Activated CD4-positive, alpha-beta memory T cell treated with anti-CD3 and anti-CD28 coated beads for 36 hours (primary cell): ENCODE measurements at regions of chr3 and their contacts with region 1.

Region 1: DNA sequence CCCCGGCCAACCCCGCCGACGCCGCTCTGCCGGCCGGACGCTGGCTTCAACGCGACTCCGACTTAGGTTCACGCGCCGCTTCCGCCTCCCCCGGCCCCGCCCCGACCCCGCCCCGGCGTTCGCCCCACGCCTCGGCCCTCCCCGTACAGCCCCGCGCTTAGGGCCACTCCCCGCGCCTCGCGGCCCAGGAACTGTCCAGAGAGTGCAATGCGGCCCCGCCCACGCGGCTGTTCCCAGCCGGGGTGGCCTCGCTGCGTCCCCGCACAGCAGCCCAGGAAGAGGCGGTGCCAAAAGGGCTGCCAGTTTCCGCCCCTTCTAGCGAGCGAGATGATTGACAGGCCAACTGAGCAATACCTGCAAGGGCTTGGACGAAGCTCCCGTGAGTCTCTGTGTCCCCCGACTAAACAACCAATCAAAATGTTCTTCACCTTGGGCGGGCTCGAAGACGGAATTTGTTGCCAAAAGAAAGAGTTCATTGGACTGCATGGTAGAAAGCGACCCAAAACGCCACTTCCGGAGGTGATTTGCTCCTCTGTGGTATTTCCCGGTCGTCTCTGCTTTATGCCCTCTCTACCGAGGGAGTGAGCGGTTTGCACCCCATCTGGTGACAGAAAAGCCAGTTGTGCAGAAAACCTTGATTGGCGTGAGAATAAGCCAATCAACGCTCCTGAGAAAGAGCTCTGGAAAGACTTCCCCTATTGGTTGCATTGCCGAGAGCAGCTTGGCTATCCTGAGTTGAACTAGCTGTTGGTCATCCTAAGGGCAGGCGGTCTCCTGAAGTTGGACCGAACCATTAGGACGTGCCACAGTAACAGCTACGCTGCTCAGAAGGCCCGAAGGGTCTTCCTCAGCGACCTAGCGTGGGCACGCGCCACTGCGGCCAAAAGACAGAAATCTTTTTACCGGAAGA is at the start of gene UBP1:
- DNase-seq: peak; percentile 99
- H3K4me3 Mint-ChIP-seq: peak within 1 kb of the TSS; percentile 100
- H3K27ac Mint-ChIP-seq: peak within 1 kb of the TSS; percentile 100
- H3K4me1 Mint-ChIP-seq: peaks cover 39% of the 10 kb centered on the region
- H3K27me3 Mint-ChIP-seq: no peaks in the 10 kb centered on the region
- total RNA-seq, gene UBP1: 52.6 to 53.2 TPM

Region 2: GRCh38 chr3:33372218-33373081 is 68.1 kb before region 1 on chr3:
- CTCF ChIA-PET with region 1: interaction called, 13 read pairs
- POLR2A ChIA-PET with region 1: interaction called, 3 read pairs
- intact Hi-C with region 1: no loop called
- DNase-seq: peak; percentile 49
- H3K4me3 Mint-ChIP-seq: no peak overlapping the region
- H3K27ac Mint-ChIP-seq: no peak overlapping the region
- H3K4me1 Mint-ChIP-seq: peaks cover 7% of the 10 kb centered on the region
- H3K27me3 Mint-ChIP-seq: peaks cover 10% of the 10 kb centered on the region

Region 3: GRCh38 chr3:33417066-33417673 is 23.4 kb before region 1 on chr3:
- CTCF ChIA-PET with region 1: interaction called, 3 read pairs
- POLR2A ChIA-PET with region 1: no interaction called
- intact Hi-C with region 1: loop called (anchors 1 kb)
- DNase-seq: peak; percentile 67
- H3K4me3 Mint-ChIP-seq: no peak overlapping the region
- H3K27ac Mint-ChIP-seq: peak overlapping the region; percentile 73
- H3K4me1 Mint-ChIP-seq: peaks cover 14% of the 10 kb centered on the region
- H3K27me3 Mint-ChIP-seq: no peaks in the 10 kb centered on the region

Region 4: GRCh38 chr3:33717866-33718594 is 277.5 kb after region 1 on chr3 and contains the start of gene CLASP2:
- CTCF ChIA-PET with region 1: no interaction called
- POLR2A ChIA-PET with region 1: no interaction called
- intact Hi-C with region 1: loop called (anchors 1 kb)
- DNase-seq: peak; percentile 89
- H3K4me3 Mint-ChIP-seq: peak within 1 kb of the TSS; percentile 85
- H3K27ac Mint-ChIP-seq: peak within 1 kb of the TSS; percentile 90
- H3K4me1 Mint-ChIP-seq: peaks cover 9% of the 10 kb centered on the region
- H3K27me3 Mint-ChIP-seq: no peaks in the 10 kb centered on the region
- total RNA-seq, gene CLASP2: 41.8 to 46.6 TPM